ENCODE measurements at regions of chr7 and their contacts with region 1.

Region 1: GRCh38 chr7:28853834-28854749 is 104.0 kb downstream of the TRIL start:
- DNase-seq: peak; percentile 85
- H3K4me3 ChIP-seq: peak overlapping the region; percentile 48
- H3K27ac ChIP-seq: no peak overlapping the region
- H3K4me1 ChIP-seq: no peaks in the 10 kb centered on the region
- H3K27me3 ChIP-seq: peaks cover 47% of the 10 kb centered on the region
- CTCF ChIP-seq: peak; percentile 95

Region 2: DNA sequence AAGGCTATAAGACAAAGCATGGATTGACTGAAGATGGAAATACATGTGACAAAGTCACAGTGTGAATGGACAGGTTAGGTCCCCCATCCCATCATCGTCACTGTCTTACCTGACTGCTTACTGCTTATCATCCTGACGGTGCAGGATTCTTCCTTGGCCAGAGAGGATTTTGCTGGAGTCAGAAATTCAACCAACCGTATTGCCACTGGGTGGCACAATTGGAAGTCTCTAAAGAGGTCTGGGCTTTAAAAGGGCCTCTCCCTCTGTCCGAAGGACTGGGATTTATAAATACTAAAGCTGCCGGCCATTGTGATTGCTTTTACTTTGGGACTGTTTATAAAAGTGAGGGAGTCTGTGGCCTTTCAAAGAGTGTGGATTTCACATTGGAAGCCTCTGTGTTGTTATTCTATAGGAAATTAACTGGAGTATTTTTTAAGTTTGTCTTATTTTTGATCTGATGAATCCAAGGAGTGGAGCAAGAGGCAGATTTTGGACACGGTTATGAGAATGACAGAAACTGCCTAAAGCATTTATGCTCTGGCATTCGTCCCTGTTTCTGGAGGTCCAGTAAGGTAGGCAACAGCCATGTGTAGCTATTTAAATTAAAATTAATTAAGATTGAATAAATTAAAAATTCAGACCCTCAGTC is 555.1 kb before region 1 on chr7:
- CTCF ChIA-PET with region 1: no interaction called
- POLR2A ChIA-PET with region 1: no interaction called
- intact Hi-C with region 1: loop called (anchors 10 kb)
- DNase-seq: peak; percentile 33
- H3K4me3 ChIP-seq: no peak overlapping the region
- H3K27ac ChIP-seq: no peak overlapping the region
- H3K4me1 ChIP-seq: no peaks in the 10 kb centered on the region
- H3K27me3 ChIP-seq: no peaks in the 10 kb centered on the region
- CTCF ChIP-seq: peak; percentile 50

Region 3: GRCh38 chr7:28358423-28358868 is 495.6 kb before region 1 on chr7:
- CTCF ChIA-PET with region 1: no interaction called
- POLR2A ChIA-PET with region 1: no interaction called
- intact Hi-C with region 1: no loop called
- DNase-seq: no peak
- H3K4me3 ChIP-seq: no peak overlapping the region
- H3K27ac ChIP-seq: no peak overlapping the region
- H3K4me1 ChIP-seq: no peaks in the 10 kb centered on the region
- H3K27me3 ChIP-seq: no peaks in the 10 kb centered on the region
- CTCF ChIP-seq: no peak

Region 4: DNA sequence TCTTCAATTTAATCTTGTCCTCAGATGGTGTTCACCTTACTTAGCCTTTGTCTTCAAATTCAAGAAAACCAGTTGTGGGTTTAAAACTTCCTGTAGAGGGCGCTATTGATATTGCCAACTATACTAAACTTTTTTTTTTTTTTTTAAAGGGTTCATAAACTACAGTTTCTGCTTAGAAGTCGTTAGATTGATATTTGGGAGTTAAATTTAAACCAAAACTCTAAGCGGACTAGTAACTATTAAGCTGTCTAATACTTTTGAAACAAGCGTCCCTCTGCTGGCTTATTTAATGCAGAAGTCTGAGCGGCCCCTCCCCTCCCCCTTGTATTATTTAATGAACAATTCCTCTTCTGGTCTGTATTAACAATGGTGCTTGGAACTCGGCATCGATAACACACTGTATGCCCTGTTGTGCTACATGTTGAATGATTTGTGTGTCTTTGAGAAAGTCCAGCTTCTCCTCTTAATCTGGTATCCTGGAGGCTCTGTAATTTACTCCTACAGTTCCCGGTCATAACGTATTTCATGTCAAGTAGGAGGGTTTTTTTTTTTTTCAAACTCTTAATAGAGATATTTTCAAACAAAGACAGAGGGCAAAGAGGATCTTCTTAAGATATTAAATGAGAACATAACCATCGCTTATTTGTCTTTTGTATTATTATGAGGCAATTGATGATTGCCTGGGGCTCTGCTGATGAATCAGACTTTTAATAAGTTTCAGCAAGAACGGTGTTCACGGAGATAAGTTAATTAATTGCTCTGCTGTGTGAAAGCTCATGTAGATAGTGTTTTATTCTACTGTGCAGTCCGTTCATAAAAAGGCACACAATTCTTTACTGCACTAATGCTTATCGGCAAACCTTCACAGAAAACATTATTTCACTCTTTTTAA is 464.3 kb before region 1 on chr7:
- CTCF ChIA-PET with region 1: no interaction called
- POLR2A ChIA-PET with region 1: no interaction called
- intact Hi-C with region 1: loop called (anchors 5 kb)
- DNase-seq: peak; percentile 70
- H3K4me3 ChIP-seq: peak overlapping the region; percentile 21
- H3K27ac ChIP-seq: no peak overlapping the region
- H3K4me1 ChIP-seq: peaks cover 3% of the 10 kb centered on the region
- H3K27me3 ChIP-seq: peaks cover 7% of the 10 kb centered on the region
- CTCF ChIP-seq: peak; percentile 85

Region 5: GRCh38 chr7:28748933-28749584 is 105.0 kb before region 1 on chr7:
- CTCF ChIA-PET with region 1: no interaction called
- POLR2A ChIA-PET with region 1: no interaction called
- intact Hi-C with region 1: no loop called
- DNase-seq: peak; percentile 81
- H3K4me3 ChIP-seq: no peak overlapping the region
- H3K27ac ChIP-seq: no peak overlapping the region
- H3K4me1 ChIP-seq: no peaks in the 10 kb centered on the region
- H3K27me3 ChIP-seq: no peaks in the 10 kb centered on the region
- CTCF ChIP-seq: no peak

Region 6: DNA sequence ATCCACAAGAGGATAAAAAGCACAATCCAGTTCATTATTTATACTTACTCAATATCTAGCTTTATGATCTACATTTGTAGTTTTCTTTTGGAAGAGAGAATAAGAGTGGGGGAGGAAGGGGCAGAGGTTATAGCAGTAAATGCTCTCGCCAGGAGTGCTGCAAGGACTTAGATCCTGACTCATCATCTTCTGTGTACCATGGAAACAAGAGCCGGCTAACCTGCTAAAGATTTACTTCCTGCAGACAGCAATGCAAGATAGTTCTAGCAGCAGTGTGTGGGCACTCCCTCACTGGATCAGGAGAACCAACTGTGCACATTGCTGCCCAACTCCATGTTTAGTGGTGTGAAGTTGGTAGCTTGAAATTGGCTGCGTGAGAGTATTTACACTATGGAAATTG is 151.7 kb after region 1 on chr7:
- CTCF ChIA-PET with region 1: no interaction called
- POLR2A ChIA-PET with region 1: no interaction called
- intact Hi-C with region 1: no loop called
- DNase-seq: no peak
- H3K4me3 ChIP-seq: no peak overlapping the region
- H3K27ac ChIP-seq: no peak overlapping the region
- H3K4me1 ChIP-seq: no peaks in the 10 kb centered on the region
- H3K27me3 ChIP-seq: no peaks in the 10 kb centered on the region
- CTCF ChIP-seq: no peak

Measured in A673 (cell line).